ENCODE measurements at regions of chr20 and their contacts with region 1.

Region 1: GRCh38 chr20:38315290-38315966 is 11.5 kb downstream of the BPI start:
- DNase-seq: no peak
- ATAC-seq: no peak
- H3K4me3 ChIP-seq: no peak overlapping the region
- H3K27ac ChIP-seq: no peak overlapping the region
- H3K4me1 ChIP-seq: no peaks in the 10 kb centered on the region
- H3K27me3 ChIP-seq: peaks cover 0 to 12% (median 0%) of the 10 kb centered on the region in 3 donors
- CTCF ChIP-seq: no peak

Region 2: DNA sequence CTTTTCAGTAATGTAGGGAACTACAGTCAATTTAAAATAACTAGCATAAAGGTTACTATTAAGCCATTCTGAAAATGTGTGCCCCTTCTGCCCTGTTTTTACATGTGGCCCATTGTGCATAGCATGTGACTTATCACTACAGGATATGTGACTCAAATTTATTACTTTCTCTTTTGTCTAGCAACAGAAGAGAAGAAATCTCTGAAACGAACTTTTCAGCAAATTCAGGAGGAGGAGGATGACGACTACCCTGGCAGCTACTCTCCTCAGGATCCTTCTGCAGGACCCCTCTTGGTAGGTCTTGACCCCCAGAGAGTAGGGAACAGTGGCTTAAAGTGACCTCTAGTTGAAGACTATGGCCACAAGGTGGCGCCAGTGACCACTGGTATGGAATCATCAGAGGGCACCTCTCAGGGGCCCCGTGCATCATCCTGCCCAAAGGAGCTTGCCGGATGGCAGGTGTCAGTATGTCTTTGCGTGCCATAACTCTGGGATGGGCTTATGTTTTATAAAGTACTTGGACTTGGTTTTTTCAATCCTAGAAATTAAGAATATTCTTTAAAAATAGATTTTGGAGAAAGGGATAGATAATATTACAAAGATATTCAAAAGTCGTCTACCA is 258.0 kb before region 1 on chr20:
- intact Hi-C with region 1: loop called in 1 of 2 experiments (anchors 10 kb)
- DNase-seq: peak; percentile 84 to 92
- ATAC-seq: peak; percentile 92 to 94 (median 94)
- H3K4me3 ChIP-seq: no peak overlapping the region
- H3K27ac ChIP-seq: peak overlapping the region; percentile 23
- H3K4me1 ChIP-seq: peaks cover 35% of the 10 kb centered on the region
- H3K27me3 ChIP-seq: no peaks in the 10 kb centered on the region
- CTCF ChIP-seq: peak; percentile 96

Region 3: DNA sequence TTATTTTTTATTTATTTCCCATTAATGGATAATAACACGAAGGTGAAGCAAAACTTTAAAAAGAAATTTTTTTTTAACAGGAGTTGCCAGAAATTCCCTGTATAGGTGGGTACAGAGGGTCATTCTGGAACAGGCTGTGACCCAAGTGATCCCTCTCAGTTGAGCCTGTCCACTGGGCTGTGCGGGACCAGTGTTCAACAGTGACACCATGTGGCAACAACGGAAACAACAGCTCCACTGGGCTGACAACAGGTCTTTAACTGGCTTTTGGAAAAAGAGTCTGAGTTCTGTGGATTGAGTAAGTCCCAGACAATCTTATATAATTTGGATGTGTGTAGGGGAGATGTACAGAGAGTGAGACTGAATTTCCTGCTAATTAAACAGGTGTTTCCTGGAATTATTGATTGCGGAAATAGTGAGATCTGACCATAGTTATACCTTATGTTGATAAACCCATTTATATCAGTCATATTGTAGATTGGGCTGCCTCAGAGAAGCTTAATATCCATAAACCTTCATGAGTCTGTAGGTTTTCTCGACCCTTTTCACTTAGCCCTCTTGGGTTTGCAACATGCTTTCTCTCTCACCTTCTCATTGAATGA is 72.5 kb before region 1 on chr20:
- intact Hi-C with region 1: loop called in 1 of 2 experiments (anchors 5 kb)
- DNase-seq: no peak
- ATAC-seq: no peak
- H3K4me3 ChIP-seq: no peak overlapping the region
- H3K27ac ChIP-seq: no peak overlapping the region
- H3K4me1 ChIP-seq: no peaks in the 10 kb centered on the region
- H3K27me3 ChIP-seq: peaks cover 0 to 3% (median 0%) of the 10 kb centered on the region in 3 donors
- CTCF ChIP-seq: no peak

Region 4: GRCh38 chr20:38260378-38261053 is 54.9 kb before region 1 on chr20 and contains the start of gene KIAA1755:
- intact Hi-C with region 1: no loop called
- DNase-seq: peak; percentile 40 to 69
- ATAC-seq: peak in 2 of 4 donors; percentile 26 to 54
- H3K4me3 ChIP-seq: peak within 1 kb of the TSS; percentile 58
- H3K27ac ChIP-seq: peak within 1 kb of the TSS; percentile 36
- H3K4me1 ChIP-seq: no peaks in the 10 kb centered on the region
- H3K27me3 ChIP-seq: peaks cover 0 to 34% (median 10%) of the 10 kb centered on the region in 3 donors
- CTCF ChIP-seq: no peak
- total RNA-seq, gene KIAA1755: 0.16 to 2.4 (median 0.48) TPM

Measured in psoas muscle (tissue), 8 donors.